Motor neuron (in vitro differentiated cells): ENCODE measurements at regions of chr11 and their contacts with region 1.

Region 1: GRCh38 chr11:71420455-71421241 is 27.5 kb downstream of the DHCR7 start:
- ATAC-seq: peak in 2 of 8 experiments; percentile 67 to 68
- H3K4me3 ChIP-seq: no peak overlapping the region
- H3K27ac ChIP-seq: no peak overlapping the region
- H3K4me1 ChIP-seq: no peaks in the 10 kb centered on the region

Region 2: DNA sequence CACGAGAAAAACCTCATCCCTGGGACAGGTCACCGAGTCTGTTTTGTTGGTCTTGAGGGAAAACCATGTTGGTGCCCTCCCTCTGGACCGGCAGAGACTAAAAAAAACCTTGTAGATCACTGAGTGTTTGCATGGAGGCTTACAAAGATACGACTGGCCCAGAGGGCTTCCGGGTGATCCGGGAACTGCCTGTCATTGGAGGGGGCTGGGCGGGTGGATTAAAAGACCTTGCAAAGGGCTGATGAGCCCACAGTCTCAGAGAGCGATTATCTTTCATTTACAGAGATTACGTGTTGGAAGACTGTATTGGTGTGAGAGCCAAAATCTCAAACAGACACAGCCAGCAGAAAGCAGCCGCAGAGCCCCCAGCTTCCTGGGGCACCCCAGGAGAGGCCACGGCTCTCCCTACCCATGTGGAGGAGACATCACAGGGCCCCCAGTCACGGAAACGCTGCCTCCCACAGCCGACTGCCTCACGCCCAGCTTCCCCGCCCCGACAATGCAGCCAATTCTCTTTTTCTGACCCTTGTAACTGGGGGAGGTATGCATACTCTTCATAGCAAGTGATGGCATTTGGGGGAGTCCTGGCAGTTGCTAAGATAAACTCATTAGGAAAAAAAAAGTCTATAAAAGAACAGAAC is 595.9 kb before region 1 on chr11:
- in situ Hi-C with region 1: loop called in 1 of 9 experiments (anchors 25 kb)
- ATAC-seq: peak in 3 of 8 experiments; percentile 8 to 36 (median 25)
- H3K4me3 ChIP-seq: peak overlapping the region in 4 of 5 donors; percentile 3 to 40 (median 26)
- H3K27ac ChIP-seq: no peak overlapping the region
- H3K4me1 ChIP-seq: peaks cover 0 to 31% of the 10 kb centered on the region in 2 donors

Region 3: DNA sequence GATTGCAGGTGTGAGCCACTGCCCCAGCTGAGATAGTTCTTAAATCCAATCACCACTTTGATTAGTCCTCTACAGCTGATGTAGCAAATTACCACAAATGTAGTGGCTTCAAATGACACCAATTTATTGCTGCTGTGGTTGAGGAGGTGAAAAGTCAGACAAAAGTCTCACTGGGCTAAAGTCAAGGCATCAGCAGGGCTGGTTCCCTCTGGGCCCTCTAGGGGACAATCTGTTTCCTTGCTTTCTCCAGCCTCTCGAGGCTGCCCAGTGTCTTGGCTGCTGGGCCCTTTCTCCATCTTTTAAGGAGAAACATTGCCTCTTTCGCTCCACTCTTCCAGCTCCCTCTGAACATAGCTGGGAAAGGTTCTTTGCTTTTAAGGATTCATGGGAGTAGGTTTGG is 117.7 kb before region 1 on chr11:
- in situ Hi-C with region 1: loop called in 1 of 9 experiments (anchors 25 kb)
- ATAC-seq: no peak
- H3K4me3 ChIP-seq: no peak overlapping the region
- H3K27ac ChIP-seq: no peak overlapping the region
- H3K4me1 ChIP-seq: no peaks in the 10 kb centered on the region